ENCODE measurements at regions of chr10 and their contacts with region 1.

Region 1: GRCh38 chr10:13371897-13372470 is 23.9 kb upstream of the SEPHS1 start:
- DNase-seq: peak; percentile 69
- H3K4me3 ChIP-seq: no peak overlapping the region
- H3K27ac ChIP-seq: no peak overlapping the region
- H3K4me1 ChIP-seq: no peaks in the 10 kb centered on the region
- H3K27me3 ChIP-seq: no peaks in the 10 kb centered on the region
- CTCF ChIP-seq: peak; percentile 81 to 93 (median 90)
- POLR2A ChIP-seq: no peak

Region 2: DNA sequence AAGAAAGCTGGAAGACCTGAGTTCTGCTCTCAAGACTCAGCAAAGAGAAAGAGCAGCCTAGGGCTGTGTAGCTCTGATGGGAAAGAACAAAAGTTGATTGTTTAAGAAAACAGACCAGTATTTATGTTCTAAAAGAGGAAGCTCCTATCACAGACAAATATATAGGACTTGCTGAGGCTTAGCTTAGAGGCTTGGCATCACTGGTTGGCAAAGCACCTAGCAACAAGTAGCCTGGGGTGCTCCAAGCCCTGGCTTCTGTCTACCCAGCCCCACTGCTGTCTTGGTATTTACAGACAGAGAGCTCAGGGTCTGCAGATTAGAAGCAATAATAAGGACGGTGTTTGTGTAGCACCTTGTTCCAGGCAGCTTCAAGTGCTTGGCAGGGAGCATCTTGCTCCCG is 333.6 kb before region 1 on chr10:
- intact Hi-C with region 1: no loop called
- DNase-seq: no peak
- H3K4me3 ChIP-seq: no peak overlapping the region
- H3K27ac ChIP-seq: no peak overlapping the region
- H3K4me1 ChIP-seq: no peaks in the 10 kb centered on the region
- H3K27me3 ChIP-seq: no peaks in the 10 kb centered on the region
- CTCF ChIP-seq: no peak
- POLR2A ChIP-seq: no peak

Region 3: DNA sequence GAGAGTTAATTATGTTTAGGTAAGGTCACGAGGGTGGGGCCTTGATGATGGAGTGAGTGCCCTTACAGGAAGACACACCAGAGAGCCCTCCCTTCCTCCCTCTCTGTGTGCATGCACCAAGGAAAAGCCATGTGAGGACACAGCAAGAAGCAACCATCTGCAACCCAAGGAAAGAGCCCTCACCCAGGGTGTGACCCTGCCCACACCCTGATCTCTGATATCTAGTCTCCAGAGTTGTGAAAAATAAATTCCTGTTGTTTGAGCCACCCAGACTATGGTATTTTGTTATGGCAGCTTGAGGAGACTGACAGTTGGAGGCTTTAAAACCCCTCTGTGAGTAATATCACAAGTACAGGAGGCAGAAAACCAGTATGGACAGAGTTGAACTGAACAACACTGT is 225.6 kb before region 1 on chr10:
- intact Hi-C with region 1: no loop called
- DNase-seq: no peak
- H3K4me3 ChIP-seq: no peak overlapping the region
- H3K27ac ChIP-seq: no peak overlapping the region
- H3K4me1 ChIP-seq: no peaks in the 10 kb centered on the region
- H3K27me3 ChIP-seq: no peaks in the 10 kb centered on the region
- CTCF ChIP-seq: no peak
- POLR2A ChIP-seq: no peak

Region 4: DNA sequence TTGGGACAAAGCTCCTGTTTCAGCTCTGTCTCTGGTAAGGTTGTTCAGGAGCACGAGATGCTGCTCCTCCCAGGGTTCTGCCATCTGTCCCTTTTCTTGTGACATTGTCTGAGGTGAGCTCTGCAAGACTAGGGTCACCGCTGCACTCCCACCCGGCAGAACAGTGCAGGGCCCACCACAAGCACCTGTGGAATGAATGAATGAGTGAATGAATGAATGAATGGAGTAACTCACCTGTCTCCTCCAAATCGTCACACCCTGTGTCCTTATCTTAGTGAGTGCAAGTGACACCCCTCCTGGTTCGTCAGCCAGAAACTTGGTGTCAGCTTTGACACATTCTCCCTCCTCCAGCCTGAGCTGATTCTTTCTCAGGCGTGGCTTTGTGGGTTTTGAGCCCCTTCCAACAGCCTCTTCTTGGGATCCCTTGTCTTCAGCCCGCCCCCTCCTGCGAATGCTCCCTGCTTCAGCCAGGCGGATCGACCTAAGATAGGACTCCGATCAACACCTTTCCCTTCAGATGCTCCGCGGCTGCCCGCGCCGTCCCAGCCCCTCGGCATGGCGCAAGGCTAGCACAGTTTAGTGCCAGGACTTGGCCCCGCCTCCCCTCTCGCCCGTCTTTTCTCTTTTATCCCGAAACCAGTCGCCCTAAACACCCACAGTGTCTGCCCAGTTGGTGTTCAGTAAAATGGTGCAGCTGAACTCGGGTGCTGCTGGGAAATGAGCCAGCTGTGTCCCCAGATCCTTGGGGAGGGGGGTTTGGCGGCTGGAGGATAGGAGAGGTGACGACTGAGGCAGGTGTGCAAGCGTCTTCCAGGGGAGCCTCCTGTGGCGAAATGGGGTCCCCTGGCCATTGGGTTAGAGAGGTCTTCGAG is 67.6 kb after region 1 on chr10:
- intact Hi-C with region 1: loop called (anchors 5 kb)
- DNase-seq: no peak
- H3K4me3 ChIP-seq: peak overlapping the region in 1 of 2 donors; percentile 22
- H3K27ac ChIP-seq: no peak overlapping the region
- H3K4me1 ChIP-seq: peaks cover 3% of the 10 kb centered on the region
- H3K27me3 ChIP-seq: no peaks in the 10 kb centered on the region
- CTCF ChIP-seq: no peak
- POLR2A ChIP-seq: no peak

Region 5: DNA sequence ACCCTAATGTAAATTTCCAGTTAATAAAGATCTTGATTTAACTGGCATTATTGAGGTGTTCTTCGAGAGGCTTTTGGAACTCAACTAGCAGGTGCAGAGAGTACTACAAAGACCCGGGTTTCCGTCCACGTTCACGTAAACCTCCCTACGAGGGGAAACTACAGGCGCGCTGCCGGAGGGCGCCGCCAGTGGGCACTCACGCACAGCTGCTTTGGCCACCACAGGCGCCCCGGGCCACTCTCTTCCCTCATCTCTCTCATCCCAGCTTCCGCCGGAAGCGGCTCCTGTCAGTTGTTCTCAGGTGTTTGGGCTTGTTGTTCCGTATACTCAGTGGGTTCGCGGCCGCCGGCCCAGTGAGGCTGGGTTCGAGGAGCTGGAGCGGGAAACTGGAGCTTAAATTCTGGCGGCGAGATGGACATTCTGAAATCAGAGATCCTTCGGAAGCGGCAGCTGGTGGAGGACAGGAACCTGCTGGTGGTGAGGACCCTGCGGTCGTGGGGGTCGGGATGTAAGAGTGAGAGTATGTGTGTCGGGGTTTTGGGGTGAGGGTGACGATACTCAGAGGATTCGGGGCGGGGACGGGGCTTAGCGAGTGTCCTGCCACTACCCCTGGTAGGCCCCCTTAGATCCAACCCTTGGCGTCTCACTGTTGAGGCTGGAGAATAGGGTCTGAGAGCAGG is 214.8 kb after region 1 on chr10 and contains the start of gene PRPF18:
- intact Hi-C with region 1: loop called (anchors 10 kb)
- DNase-seq: peak; percentile 90
- H3K4me3 ChIP-seq: peak within 1 kb of the TSS; percentile 73 to 90
- H3K27ac ChIP-seq: peak within 1 kb of the TSS; percentile 51 to 65
- H3K4me1 ChIP-seq: peaks cover 5% of the 10 kb centered on the region
- H3K27me3 ChIP-seq: no peaks in the 10 kb centered on the region
- CTCF ChIP-seq: peak; percentile 90 to 96 (median 96)
- POLR2A ChIP-seq: peak; percentile 11
- total RNA-seq, gene PRPF18: 23.1 to 31.1 TPM

Region 6: GRCh38 chr10:13597909-13598308 is 225.9 kb after region 1 on chr10:
- intact Hi-C with region 1: no loop called
- DNase-seq: no peak
- H3K4me3 ChIP-seq: no peak overlapping the region
- H3K27ac ChIP-seq: no peak overlapping the region
- H3K4me1 ChIP-seq: no peaks in the 10 kb centered on the region
- H3K27me3 ChIP-seq: no peaks in the 10 kb centered on the region
- CTCF ChIP-seq: no peak
- POLR2A ChIP-seq: no peak

Measured in prostate gland (tissue), 2 donors.